Head of caudate nucleus (tissue), 42 donors: ENCODE measurements at regions of chr7 and their contacts with region 1.

Region 1: DNA sequence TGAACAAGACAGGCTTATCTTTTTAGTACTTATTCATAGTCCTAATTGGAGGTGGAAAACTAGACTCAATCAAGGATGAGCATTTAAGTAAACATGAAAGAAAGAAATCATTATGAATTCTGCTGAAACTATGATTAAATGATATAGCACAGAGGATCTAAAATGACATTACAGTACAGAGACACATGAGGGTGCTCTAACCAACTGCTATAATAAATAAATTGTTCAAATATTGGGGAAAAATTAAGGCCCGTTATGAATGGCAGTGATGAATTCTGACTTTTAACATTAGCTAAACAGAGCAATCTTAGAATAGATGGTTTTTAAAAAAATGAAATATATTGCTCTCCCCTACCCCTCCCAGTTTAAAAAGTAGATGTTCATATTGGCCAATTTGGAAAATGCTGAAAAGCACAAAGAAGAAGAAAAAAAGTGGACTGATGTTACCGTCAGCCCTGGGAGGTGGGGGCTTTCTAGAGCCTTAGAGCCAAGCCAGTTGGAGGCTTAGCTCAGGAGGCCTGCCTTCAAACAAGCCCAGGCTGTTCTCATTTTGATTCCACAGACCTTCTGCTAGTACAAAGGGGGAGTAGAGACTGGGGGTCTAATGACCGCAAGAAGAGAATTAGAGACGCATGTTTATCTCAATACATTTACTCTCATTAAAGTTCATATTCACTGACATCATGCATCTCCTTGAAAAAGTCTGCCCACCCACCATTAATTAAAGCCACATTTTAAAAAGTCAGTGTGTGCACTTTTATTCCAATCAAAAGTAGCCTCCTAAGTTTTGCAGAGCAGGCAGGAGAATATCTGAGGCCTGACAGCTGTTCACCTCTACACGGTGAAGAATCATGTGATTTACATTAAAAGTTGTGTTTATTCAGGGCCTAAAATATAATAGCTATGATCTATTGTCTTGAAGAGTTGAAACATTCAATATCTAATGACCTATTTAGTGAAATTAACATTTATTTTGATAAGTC is 10.0 kb downstream of the WNT2 start:
- DNase-seq: no peak

Region 2: GRCh38 chr7:117152213-117153007 is 160.5 kb before region 1 on chr7:
- intact Hi-C with region 1: no loop called
- DNase-seq: no peak

Region 3: DNA sequence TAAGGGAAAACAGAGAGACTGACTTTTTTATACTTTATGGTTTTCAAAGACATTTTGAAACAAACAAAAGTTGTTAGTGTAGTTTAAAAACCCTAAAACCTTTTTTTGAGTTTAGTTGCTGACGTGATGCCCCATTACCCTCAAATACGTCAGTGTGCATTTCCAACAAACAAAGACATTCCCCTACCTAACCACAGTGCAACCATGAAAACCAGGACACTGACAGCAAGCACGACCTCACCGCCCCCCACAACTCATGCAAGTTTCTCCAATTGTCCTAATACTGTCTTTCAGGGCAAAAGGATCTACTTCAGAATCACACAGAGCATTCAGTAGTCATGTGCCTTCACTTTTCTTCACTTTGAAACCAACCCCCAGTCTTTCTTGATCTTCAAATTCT is 65.1 kb before region 1 on chr7:
- intact Hi-C with region 1: no loop called
- DNase-seq: no peak

Region 4: DNA sequence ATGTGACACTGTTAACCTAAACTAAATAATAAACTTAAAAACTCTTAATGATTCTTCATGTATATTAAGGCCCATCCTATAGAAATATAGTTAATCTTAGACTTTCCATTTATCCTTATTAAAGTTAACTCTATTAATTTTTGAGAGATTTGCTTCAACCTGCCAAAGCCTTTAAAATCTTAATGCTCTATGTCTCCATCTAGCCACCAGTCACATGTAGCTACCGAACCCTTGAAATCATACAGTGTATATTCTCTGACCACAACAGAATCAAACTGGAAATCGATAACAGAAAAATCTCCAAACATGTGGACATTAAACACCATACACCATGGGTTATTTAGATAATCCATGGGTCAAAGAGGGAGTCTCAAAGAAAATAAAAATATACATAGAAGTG is 62.5 kb after region 1 on chr7:
- intact Hi-C with region 1: loop called (anchors 10 kb)
- DNase-seq: no peak